ENCODE measurements at regions of chr19 and their contacts with region 1.

Region 1: GRCh38 chr19:54023191-54023590 is 31.8 kb downstream of the CACNG6 start:
- DNase-seq: no peak
- H3K4me3 ChIP-seq: no peak overlapping the region
- H3K27ac ChIP-seq: no peak overlapping the region
- H3K4me1 ChIP-seq: no peaks in the 10 kb centered on the region
- H3K27me3 ChIP-seq: no peaks in the 10 kb centered on the region
- CTCF ChIP-seq: no peak

Region 2: DNA sequence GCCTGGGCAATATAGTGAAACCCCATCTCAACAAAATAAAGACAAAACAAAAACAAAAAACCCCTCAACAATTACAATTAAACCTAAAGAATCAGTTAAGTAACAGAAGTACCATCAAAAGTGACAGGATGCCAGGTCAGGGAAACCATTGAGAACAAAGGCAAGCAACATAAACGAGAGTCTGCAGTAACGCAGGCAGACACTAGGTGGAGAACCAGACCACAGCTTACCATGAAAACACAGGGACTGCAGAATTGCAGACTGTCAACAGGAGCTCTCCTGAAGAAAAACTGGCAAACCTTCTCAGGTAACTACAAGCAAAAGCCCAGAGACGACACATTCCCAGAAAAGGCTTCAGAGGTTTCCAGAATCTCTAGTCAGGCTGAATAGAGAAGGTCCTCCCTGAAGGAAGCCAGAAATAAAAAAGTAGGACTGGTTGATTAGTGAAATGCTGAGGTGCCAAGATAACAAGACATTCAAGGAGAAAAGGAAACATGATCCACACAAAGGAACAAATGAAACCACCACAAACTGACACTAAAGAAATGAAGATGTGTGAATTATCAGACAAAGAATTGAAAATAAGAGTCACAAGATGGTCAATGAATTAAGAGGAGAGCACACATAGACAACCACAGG is 827.8 kb before region 1 on chr19:
- CTCF ChIA-PET with region 1: interaction called, 24 read pairs
- dilution Hi-C with region 1: no loop called
- in situ Hi-C with region 1: no loop called
- intact Hi-C with region 1: no loop called
- DNase-seq: peak; percentile 74
- H3K4me3 ChIP-seq: no peak overlapping the region
- H3K27ac ChIP-seq: no peak overlapping the region
- H3K4me1 ChIP-seq: no peaks in the 10 kb centered on the region
- H3K27me3 ChIP-seq: no peaks in the 10 kb centered on the region
- CTCF ChIP-seq: peak; percentile 87 to 94

Region 3: GRCh38 chr19:53772943-53773342 is 250.2 kb before region 1 on chr19:
- CTCF ChIA-PET with region 1: no interaction called
- dilution Hi-C with region 1: no loop called
- in situ Hi-C with region 1: no loop called
- intact Hi-C with region 1: loop called (anchors 2 kb)
- DNase-seq: peak; percentile 38
- H3K4me3 ChIP-seq: no peak overlapping the region
- H3K27ac ChIP-seq: no peak overlapping the region
- H3K4me1 ChIP-seq: no peaks in the 10 kb centered on the region
- H3K27me3 ChIP-seq: no peaks in the 10 kb centered on the region
- CTCF ChIP-seq: peak; percentile 34 to 62

Region 4: GRCh38 chr19:53792721-53793433 is 230.3 kb before region 1 on chr19:
- CTCF ChIA-PET with region 1: no interaction called
- dilution Hi-C with region 1: no loop called
- in situ Hi-C with region 1: no loop called
- intact Hi-C with region 1: loop called (anchors 5 kb)
- DNase-seq: peak; percentile 78
- H3K4me3 ChIP-seq: no peak overlapping the region
- H3K27ac ChIP-seq: no peak overlapping the region
- H3K4me1 ChIP-seq: no peaks in the 10 kb centered on the region
- H3K27me3 ChIP-seq: no peaks in the 10 kb centered on the region
- CTCF ChIP-seq: peak; percentile 83 to 90

Region 5: DNA sequence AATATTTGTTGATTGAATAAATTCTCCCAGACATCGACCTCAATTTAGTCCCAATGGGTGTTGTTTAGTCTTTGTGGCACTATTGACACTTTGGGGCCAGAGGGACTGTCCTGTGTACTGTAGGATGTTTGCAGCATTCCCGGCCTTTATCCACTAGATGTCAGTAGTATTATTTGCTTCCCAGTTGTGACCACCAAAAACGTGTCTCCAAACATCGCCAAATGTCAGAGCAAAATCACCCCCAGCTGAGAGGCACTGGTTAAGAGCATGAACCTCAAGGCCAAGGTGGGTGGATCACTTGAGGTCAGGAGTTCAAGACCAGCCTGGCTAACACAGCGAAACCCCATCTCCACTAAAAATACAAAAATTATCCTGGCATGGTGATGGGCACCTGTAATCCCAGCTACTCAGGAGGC is 214.5 kb before region 1 on chr19:
- CTCF ChIA-PET with region 1: interaction called, 3 read pairs
- dilution Hi-C with region 1: no loop called
- in situ Hi-C with region 1: loop called in 1 of 2 experiments (anchors 25 kb)
- intact Hi-C with region 1: loop called (anchors 1 kb)
- DNase-seq: peak; percentile 29
- H3K4me3 ChIP-seq: no peak overlapping the region
- H3K27ac ChIP-seq: no peak overlapping the region
- H3K4me1 ChIP-seq: no peaks in the 10 kb centered on the region
- H3K27me3 ChIP-seq: no peaks in the 10 kb centered on the region
- CTCF ChIP-seq: peak; percentile 36 to 54

Region 6: DNA sequence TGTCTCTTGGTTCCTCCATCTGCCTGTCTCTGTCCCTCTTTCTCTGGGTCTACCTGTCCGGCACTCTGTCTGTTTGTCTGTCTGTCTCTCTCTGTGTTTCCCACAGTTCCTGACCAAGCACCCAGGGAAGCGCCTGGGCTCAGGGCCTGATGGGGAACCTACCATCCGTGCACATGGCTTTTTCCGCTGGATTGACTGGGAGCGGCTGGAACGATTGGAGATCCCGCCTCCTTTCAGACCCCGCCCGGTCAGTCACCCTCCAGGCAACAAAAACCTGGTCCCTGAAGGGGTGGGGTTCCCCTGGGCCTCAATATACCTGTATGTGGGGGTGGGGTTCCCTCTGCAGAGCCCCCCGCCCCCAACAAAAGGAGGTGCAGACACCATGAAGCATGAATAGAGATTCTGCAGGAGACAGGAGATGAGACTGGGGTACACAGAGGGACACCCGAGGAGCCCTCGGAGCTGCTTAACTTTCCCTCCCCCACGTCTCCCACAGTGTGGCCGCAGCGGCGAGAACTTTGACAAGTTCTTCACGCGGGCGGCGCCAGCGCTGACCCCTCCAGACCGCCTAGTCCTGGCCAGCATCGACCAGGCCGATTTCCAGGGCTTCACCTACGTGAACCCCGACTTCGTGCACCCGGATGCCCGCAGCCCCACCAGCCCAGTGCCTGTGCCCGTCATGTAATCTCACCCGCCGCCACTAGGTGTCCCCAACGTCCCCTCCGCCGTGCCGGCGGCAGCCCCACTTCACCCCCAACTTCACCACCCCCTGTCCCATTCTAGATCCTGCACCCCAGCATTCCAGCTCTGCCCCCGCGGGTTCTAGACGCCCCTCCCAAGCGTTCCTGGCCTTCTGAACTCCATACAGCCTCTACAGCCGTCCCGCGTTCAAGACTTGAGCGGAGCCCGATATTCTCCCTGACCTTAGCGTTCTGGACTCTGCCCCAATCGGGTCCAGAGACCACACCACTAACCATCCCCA is 116.7 kb before region 1 on chr19:
- CTCF ChIA-PET with region 1: no interaction called
- dilution Hi-C with region 1: no loop called
- in situ Hi-C with region 1: no loop called
- intact Hi-C with region 1: loop called (anchors 1 kb)
- DNase-seq: no peak
- H3K4me3 ChIP-seq: no peak overlapping the region
- H3K27ac ChIP-seq: no peak overlapping the region
- H3K4me1 ChIP-seq: no peaks in the 10 kb centered on the region
- H3K27me3 ChIP-seq: peaks cover 23% of the 10 kb centered on the region
- CTCF ChIP-seq: peak; percentile 50 to 71

Region 7: DNA sequence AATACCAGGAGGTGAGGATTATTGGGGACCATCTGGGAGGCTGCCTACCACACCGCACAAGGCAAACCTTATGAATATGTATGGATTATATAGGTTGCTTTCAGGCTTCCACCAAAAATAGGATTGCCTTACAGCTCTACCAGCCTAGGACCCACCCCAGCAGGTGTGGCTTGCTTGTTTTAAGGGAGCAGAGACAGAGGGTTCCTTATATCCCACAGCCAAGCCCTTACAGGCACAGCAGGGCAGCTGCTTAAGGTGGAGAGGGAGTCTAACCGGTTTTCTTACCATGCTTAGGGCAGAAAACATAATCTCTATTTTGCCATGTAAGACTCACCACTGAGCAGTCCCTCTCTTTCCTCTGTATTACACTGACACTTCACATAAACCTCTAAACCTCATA is 376.0 kb after region 1 on chr19:
- CTCF ChIA-PET with region 1: interaction called, 26 read pairs
- dilution Hi-C with region 1: no loop called
- in situ Hi-C with region 1: no loop called
- intact Hi-C with region 1: no loop called
- DNase-seq: peak; percentile 8
- H3K4me3 ChIP-seq: no peak overlapping the region
- H3K27ac ChIP-seq: no peak overlapping the region
- H3K4me1 ChIP-seq: no peaks in the 10 kb centered on the region
- H3K27me3 ChIP-seq: no peaks in the 10 kb centered on the region
- CTCF ChIP-seq: no peak

Region 8: DNA sequence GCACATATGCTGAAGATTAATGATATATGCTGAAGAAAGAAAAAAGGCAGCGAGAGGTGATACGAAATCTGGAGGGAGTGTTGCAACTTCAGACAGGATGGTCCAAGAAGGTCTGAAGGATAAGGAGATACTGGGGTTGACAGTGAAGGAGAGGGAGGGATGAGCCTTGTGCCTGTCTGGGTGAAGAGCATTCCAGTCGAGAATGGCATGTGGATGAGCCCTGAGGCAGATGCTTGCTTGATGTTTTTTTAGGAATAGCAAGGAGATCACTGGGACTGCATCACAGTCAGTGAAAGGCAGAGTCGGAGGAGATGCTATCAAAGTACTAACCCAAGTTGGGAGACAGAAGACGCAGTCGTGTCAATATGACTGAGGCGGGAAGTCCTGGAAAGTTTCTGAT is 466.1 kb after region 1 on chr19:
- CTCF ChIA-PET with region 1: no interaction called
- dilution Hi-C with region 1: no loop called
- in situ Hi-C with region 1: no loop called
- intact Hi-C with region 1: no loop called
- DNase-seq: no peak
- H3K4me3 ChIP-seq: no peak overlapping the region
- H3K27ac ChIP-seq: no peak overlapping the region
- H3K4me1 ChIP-seq: no peaks in the 10 kb centered on the region
- H3K27me3 ChIP-seq: peaks cover 5% of the 10 kb centered on the region
- CTCF ChIP-seq: no peak

Measured in mammary epithelial cell (primary cell).